Activated naive CD8-positive, alpha-beta T cell treated with anti-CD3 and anti-CD28 coated beads, Interleukin-2, amount 10 ng/mL, durations not matched to agents 7 days and 5 days (primary cell): ENCODE measurements at regions of chr6 and their contacts with region 1.

Region 1: DNA sequence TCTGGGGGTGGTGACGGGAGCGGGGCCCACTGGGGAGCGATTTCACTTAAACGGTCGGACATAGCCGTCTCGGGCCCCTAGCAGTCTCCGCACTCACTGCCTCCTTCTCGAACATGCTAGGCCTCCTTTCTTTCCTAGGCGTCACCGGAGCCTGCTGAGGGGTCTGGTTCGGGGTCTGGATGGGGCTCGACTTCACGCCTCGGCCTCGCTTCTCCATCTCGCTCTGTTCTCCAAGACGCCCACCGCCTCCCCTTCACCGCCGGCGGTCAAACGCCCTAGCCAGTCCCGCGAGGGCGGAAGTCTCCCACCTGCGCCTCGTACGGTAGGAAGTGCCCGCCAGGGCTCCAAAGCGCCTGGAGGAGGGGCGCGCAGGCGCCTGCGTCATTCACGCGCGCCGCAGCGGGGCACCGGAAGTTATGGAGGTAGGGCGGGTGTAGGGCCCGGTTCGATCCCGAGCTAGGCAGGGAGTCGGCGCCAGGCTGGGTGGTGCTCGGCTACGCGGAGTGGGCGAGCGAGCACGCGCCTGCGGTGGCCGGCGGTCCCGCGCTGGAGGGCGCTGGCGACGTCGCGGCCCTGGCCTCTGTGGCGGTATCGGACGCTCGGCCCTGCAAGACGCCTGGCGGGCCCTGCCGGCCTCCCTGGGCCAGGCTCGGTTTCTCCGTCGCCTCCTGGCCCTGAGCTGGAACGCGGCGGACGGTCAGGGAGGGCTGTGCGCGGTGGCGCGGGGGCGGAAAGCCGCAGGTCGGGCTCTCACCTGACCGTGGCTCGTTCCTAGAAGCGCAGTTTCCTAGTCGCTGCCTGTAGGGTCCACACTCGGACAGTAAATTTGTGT is at the starts of genes DYNLT2 and ERMARD:
- DNase-seq: peak; percentile 95
- ATAC-seq: peak; percentile 97
- H3K4me3 Mint-ChIP-seq: peak within 1 kb of the TSS; percentile 98
- H3K27ac Mint-ChIP-seq: peak within 1 kb of the TSS; percentile 100
- H3K4me1 Mint-ChIP-seq: peaks cover 21% of the 10 kb centered on the region
- H3K27me3 Mint-ChIP-seq: no peaks in the 10 kb centered on the region
- total RNA-seq, gene DYNLT2: 2.3 to 2.9 TPM
- total RNA-seq, gene ERMARD: 33.9 to 36.4 TPM

Region 2: DNA sequence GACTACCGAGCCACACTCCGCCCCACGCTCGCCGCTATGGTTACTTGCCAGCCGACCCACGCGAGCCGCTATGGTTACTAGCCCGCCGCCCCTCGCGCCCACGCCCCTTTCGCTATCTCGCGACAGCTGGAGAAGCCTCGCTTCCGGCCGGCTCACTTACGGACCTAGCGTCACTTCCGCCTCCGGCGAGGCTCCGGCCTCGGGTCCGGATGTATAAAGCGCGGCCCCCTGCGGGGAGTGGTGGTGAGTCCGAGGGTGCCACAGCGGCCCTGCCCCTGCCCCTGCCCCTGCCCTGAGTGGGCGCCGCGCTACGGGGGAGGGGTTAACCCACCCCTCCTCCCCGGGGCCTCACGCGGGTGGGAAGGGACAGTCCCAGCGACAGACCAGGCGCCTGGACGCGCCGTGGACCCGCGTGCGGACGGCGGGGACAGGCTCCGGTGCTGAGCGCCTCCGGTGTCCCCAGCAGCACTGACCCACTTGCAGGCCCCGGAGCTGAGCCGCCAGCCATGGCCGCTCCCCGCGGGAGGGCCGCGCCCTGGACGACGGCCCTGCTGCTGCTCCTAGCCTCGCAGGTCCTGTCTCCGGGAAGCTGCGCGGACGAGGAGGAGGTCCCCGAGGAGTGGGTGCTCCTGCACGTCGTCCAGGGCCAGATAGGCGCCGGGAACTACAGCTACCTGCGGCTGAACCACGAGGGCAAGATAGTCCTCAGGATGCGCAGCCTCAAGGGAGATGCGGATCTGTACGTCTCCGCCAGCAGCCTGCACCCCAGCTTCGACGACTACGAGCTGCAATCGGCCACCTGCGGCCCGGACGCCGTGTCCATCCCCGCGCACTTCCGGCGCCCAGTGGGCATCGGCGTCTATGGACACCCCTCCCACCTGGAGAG is 49.3 kb before region 1 on chr6 and contains the starts of genes C6orf120 and WDR27:
- POLR2A ChIA-PET with region 1: interaction called, 36 read pairs
- DNase-seq: peak; percentile 95
- ATAC-seq: peak; percentile 91
- H3K4me3 Mint-ChIP-seq: peak within 1 kb of the TSS; percentile 88
- H3K27ac Mint-ChIP-seq: peak within 1 kb of the TSS; percentile 86
- H3K4me1 Mint-ChIP-seq: peaks cover 39% of the 10 kb centered on the region
- H3K27me3 Mint-ChIP-seq: no peaks in the 10 kb centered on the region
- total RNA-seq, gene C6orf120: 22.2 to 22.5 TPM
- total RNA-seq, gene WDR27: 37.6 to 39.6 TPM

Region 3: GRCh38 chr6:169723200-169723909 is 28.1 kb before region 1 on chr6:
- POLR2A ChIA-PET with region 1: interaction called, 15 read pairs
- DNase-seq: peak; percentile 79
- ATAC-seq: peak; percentile 44
- H3K4me3 Mint-ChIP-seq: peak overlapping the region; percentile 94
- H3K27ac Mint-ChIP-seq: peak overlapping the region; percentile 95
- H3K4me1 Mint-ChIP-seq: peaks cover 36% of the 10 kb centered on the region
- H3K27me3 Mint-ChIP-seq: peaks cover 4% of the 10 kb centered on the region

Region 4: GRCh38 chr6:170554013-170554795 is 802.7 kb after region 1 on chr6 and contains the start of gene TBP:
- POLR2A ChIA-PET with region 1: interaction called, 13 read pairs
- DNase-seq: peak; percentile 93
- ATAC-seq: peak; percentile 95
- H3K4me3 Mint-ChIP-seq: no peak within 1 kb of the TSS
- H3K27ac Mint-ChIP-seq: no peak within 1 kb of the TSS
- H3K4me1 Mint-ChIP-seq: peaks cover 32% of the 10 kb centered on the region
- H3K27me3 Mint-ChIP-seq: no peaks in the 10 kb centered on the region
- total RNA-seq, gene TBP: 28.2 to 29.6 TPM